ENCODE measurements at regions of chr5 and their contacts with region 1.

Region 1: DNA sequence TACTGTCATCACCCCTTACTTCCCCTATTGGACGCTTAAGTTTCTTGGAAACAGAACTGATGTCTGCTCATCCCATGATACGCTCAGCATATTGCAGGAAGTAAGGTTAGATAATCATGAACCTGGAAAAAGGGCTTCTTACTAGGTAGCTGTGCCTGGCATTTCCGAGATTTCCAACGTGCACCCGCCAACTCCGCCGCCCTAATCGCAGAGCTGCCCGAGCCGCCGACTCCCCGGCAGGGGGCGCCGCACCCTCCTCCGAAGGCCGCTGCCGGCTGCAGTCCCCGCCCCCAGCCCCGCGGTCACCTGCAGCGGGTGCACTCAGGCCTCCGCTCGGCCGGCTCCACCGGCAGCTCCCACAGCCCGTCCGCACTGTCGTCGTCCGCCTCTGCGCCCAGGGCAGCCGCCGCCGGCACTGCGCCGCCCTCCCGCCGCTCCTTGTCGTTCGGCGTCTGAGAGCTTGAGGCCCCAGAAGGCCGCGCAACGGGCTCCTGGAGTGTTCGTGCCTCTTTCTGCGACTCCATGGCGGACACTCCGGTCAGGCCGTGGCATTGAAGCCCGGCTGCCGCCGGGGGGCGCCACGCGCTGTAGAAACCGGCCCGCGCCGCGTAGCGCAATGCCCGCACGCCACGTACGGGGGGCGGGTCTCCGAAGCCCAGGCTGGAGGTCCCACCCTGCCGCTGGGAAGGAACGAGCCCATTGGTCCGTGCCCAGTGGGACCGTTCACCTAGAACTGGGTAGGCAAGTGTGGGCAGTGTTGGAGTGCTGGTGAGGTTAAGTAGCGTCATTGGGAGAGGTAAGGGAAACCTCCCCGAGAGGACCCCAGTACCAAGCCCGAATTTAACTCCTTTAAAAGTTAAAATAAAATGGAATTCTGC is at the start of gene DTWD2:
- DNase-seq: peak; percentile 92 to 97 (median 96)
- ATAC-seq: peak; percentile 98 to 100 (median 99)
- H3K4me3 ChIP-seq: peak within 1 kb of the TSS; percentile 62 to 93 (median 82)
- H3K27ac ChIP-seq: peak within 1 kb of the TSS; percentile 75 to 98 (median 96)
- H3K4me1 ChIP-seq: peaks cover 0 to 23% (median 12%) of the 10 kb centered on the region in 12 donors
- H3K27me3 ChIP-seq: no peaks in the 10 kb centered on the region
- CTCF ChIP-seq: peak; percentile 80 to 98 (median 91)
- POLR2A ChIP-seq: peak in 1 of 2 donors; percentile 62
- total RNA-seq, gene DTWD2: 6.1 to 16.0 (median 12.2) TPM

Region 2: GRCh38 chr5:119070828-119071572 is 82.8 kb after region 1 on chr5 and contains the start of gene DMXL1:
- intact Hi-C with region 1: loop called in 5 of 10 experiments (anchors 1 to 5 kb)
- DNase-seq: peak; percentile 99 to 100 (median 100)
- ATAC-seq: peak; percentile 97 to 98 (median 98)
- H3K4me3 ChIP-seq: peak within 1 kb of the TSS; percentile 71 to 100 (median 92)
- H3K27ac ChIP-seq: peak within 1 kb of the TSS; percentile 89 to 99 (median 96)
- H3K4me1 ChIP-seq: peaks cover 0 to 44% (median 25%) of the 10 kb centered on the region in 12 donors
- H3K27me3 ChIP-seq: peaks cover 0 to 3% (median 0%) of the 10 kb centered on the region in 9 donors
- CTCF ChIP-seq: no peak
- POLR2A ChIP-seq: peak in 1 of 2 donors; percentile 69
- total RNA-seq, gene DMXL1: 22.4 to 39.0 (median 27.7) TPM

Region 3: DNA sequence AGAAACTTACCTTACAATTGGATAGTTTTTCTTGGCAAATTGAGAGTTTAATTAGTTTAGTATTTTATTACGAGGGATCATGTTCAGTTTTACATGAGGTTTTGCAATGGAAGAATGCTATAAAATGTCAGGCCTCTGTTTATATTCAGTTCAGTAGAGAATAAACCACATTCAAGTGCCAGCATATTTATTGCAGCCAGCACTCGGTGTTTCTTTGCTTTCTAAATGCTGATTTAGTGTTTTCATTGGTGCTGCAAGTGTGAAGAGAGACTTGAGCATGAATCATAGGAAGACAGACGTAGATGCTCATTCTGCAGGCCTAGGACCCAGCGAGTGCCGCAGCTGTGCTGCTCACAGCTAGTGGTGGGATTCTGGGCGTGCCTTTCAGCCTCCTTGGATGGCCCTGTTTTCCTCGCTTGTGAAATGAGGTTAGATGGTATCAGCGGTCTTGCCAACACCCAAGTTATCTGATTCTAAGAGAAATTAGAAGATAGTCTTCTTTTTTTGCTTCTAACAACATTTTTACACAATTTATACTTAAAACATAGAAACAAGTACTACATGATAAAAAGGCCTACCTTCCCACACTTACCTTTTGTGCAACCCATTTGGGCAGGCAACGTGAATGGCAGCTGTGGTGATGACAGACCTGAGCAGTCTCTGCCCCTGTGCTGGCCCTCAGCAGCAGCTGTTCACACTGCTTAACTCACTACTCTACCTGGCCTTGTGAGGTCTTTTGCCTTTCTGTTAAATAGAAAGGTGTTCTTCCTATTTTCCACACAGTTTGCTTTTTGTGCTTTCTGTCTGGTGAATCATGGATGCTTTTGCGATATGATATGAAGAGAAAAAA is 340.8 kb after region 1 on chr5:
- intact Hi-C with region 1: loop called in 2 of 10 experiments (anchors 5 to 10 kb)
- DNase-seq: no peak
- ATAC-seq: peak in 1 of 4 donors; percentile 21
- H3K4me3 ChIP-seq: no peak overlapping the region
- H3K27ac ChIP-seq: peak overlapping the region in 1 of 12 donors; percentile 86
- H3K4me1 ChIP-seq: peaks cover 0 to 95% (median under 1%) of the 10 kb centered on the region in 12 donors
- H3K27me3 ChIP-seq: no peaks in the 10 kb centered on the region
- CTCF ChIP-seq: no peak
- POLR2A ChIP-seq: no peak

Region 4: GRCh38 chr5:119336845-119337580 is 348.8 kb after region 1 on chr5:
- intact Hi-C with region 1: loop called in 4 of 10 experiments (anchors 5 to 10 kb)
- DNase-seq: no peak
- ATAC-seq: no peak
- H3K4me3 ChIP-seq: no peak overlapping the region
- H3K27ac ChIP-seq: peak overlapping the region in 9 of 12 donors; percentile 2 to 73 (median 39)
- H3K4me1 ChIP-seq: peaks cover 0 to 85% (median 11%) of the 10 kb centered on the region in 12 donors
- H3K27me3 ChIP-seq: no peaks in the 10 kb centered on the region
- CTCF ChIP-seq: no peak
- POLR2A ChIP-seq: no peak